ENCODE measurements at regions of chr5 and their contacts with region 1.

Region 1: DNA sequence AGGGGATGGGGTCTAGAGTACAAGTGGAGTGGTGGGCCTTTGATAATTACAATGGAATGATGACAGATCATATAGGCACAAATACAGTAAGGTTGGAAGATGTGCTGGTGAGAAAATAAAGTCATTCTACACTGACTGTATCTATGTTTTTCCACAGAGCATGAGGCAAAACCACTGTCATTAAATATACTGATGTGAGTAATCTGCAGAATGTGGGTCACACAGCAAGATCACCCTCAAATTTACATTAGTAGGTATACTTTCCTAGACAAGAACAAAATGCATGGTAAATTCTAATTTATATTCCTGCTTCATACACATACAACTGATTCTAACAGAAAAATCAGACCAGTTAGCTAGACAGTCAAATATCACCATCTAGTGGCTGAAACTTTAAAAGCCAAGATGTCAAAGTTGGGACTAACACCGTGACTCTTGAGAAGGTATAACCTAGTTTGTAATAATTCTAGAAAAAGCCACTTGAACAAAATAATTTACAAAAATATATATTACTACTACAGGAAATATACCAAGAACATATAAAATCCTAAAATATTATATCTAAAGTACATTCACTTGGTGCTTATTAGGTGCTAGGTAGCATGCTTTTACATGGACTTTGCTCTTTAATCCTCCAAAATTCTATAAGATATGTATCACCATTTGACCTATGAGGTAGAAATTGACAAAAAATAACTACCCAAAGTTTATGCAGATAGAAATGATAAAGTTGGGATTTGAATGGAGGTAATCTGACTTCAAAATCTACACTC is 19.5 kb downstream of the TTC33 start:
- DNase-seq: peak; percentile 61 to 85 (median 80)
- H3K4me3 ChIP-seq: no peak overlapping the region
- H3K27ac ChIP-seq: no peak overlapping the region
- H3K4me1 ChIP-seq: peaks cover 15 to 44% (median 23%) of the 10 kb centered on the region in 4 experiments
- H3K27me3 ChIP-seq: no peaks in the 10 kb centered on the region

Region 2: DNA sequence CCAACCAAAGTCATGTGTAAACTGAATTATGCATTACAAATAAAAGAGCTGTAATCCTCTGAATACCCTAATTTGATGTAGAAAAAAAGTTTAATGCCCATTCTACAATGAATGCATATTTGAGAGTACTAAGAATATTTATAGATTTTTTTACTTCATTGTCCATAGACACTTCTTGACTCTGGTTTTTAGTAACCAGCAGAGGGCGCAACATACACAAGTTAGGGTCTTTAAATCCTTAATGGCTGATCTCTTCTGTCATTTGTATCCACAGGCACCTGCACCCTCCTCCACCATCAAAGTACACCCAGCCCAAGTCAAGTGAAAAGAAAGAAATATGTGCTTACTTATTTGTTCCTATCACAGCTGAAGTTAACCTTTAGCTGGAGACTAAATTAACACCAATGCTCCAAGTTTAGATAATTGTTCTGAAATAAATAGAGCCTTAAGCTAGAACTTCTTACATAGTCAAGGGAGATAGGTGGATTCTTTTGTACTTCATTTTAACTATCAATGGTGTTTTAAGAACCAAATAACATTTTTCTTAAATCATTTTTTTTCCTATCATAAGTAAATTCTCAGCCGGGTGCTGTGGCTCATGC is 787.3 kb before region 1 on chr5:
- CTCF ChIA-PET with region 1: interaction called, 18 read pairs
- POLR2A ChIA-PET with region 1: no interaction called
- DNase-seq: peak; percentile 79 to 89 (median 86)
- H3K4me3 ChIP-seq: no peak overlapping the region
- H3K27ac ChIP-seq: no peak overlapping the region
- H3K4me1 ChIP-seq: peaks cover 0 to 5% (median 1%) of the 10 kb centered on the region in 4 experiments
- H3K27me3 ChIP-seq: no peaks in the 10 kb centered on the region

Region 3: GRCh38 chr5:40679155-40679913 is 57.0 kb before region 1 on chr5:
- CTCF ChIA-PET with region 1: interaction called, 28 read pairs
- POLR2A ChIA-PET with region 1: no interaction called
- DNase-seq: peak; percentile 90 to 96 (median 93)
- H3K4me3 ChIP-seq: peak overlapping the region; percentile 84 to 96 (median 90)
- H3K27ac ChIP-seq: peak overlapping the region; percentile 64 to 88
- H3K4me1 ChIP-seq: peaks cover 38 to 70% (median 55%) of the 10 kb centered on the region in 4 experiments
- H3K27me3 ChIP-seq: no peaks in the 10 kb centered on the region